ENCODE measurements at regions of chr10 and their contacts with region 1.

Region 1: GRCh38 chr10:69092959-69093850 is 5.3 kb downstream of the SRGN start:
- DNase-seq: peak in 2 of 3 donors; percentile 62 to 81
- ATAC-seq: peak; percentile 76 to 77
- H3K4me3 ChIP-seq: no peak overlapping the region
- H3K27ac ChIP-seq: no peak overlapping the region
- H3K4me1 ChIP-seq: peaks cover 2% of the 10 kb centered on the region
- H3K27me3 ChIP-seq: no peaks in the 10 kb centered on the region

Region 2: DNA sequence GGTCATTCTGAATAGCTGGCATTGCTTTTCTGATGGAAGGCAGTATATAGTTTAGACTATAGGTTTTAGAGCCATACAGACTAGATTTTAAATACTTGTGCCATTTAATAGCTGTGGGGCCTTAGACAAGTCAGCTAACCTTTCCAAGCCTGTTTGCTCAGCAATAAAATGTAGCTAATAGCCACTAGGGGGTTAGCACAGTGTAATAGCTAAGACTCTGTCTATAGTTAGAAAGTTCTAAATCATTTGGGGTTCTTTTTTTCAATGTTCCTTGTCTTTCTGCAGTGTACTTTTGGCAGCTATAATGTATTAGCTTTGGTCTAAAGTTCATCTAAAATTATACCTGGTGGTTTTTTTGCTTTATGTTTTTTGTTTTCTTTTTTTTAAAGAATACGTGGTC is 112.1 kb before region 1 on chr10:
- intact Hi-C with region 1: no loop called
- DNase-seq: no peak
- ATAC-seq: no peak
- H3K4me3 ChIP-seq: no peak overlapping the region
- H3K27ac ChIP-seq: no peak overlapping the region
- H3K4me1 ChIP-seq: no peaks in the 10 kb centered on the region
- H3K27me3 ChIP-seq: no peaks in the 10 kb centered on the region

Region 3: GRCh38 chr10:69004821-69005220 is 88.4 kb before region 1 on chr10:
- intact Hi-C with region 1: loop called (anchors 2 to 10 kb)
- DNase-seq: no peak
- ATAC-seq: peak; percentile 45 to 48
- H3K4me3 ChIP-seq: no peak overlapping the region
- H3K27ac ChIP-seq: no peak overlapping the region
- H3K4me1 ChIP-seq: no peaks in the 10 kb centered on the region
- H3K27me3 ChIP-seq: no peaks in the 10 kb centered on the region

Region 4: DNA sequence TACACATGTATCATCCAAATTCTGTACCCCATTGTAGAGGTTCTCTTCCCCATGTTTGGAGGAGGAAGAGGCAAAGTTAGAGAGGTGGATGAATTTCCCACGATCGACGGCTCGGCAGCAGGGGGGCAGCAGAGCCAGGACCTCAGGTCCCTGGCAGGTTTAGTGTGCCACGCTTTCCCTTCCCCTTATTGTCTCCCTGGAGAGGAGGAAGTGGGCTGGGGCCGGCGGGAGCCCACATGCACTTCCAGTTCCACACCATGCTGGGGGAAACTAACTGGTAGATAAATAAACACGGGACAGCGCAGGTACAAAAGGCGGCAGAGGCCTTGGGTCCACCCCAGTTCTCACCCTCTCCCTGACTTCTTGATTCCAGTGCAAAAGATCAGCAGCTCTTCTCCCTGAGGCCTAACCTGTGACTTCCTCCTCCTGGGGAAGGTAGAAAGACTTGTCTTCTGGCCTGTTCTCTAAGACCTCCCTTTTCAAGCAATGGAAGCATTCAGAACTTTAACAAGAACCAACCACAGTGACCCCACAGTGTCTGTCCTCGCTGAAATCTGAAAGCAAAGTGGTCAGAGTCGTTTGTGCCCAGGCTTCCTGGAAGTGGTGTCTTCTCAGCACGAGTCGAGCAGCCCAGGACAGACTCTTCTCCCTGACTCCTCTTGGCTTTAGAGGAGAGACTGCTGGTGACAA is 35.8 kb before region 1 on chr10:
- intact Hi-C with region 1: loop called in 1 of 4 experiments (anchors 5 kb)
- DNase-seq: peak; percentile 43 to 79 (median 79)
- ATAC-seq: peak; percentile 33 to 46
- H3K4me3 ChIP-seq: no peak overlapping the region
- H3K27ac ChIP-seq: peak overlapping the region; percentile 66
- H3K4me1 ChIP-seq: peaks cover 8% of the 10 kb centered on the region
- H3K27me3 ChIP-seq: no peaks in the 10 kb centered on the region

Region 5: GRCh38 chr10:69179743-69180524 is 86.7 kb after region 1 on chr10 and contains the start of gene SUPV3L1:
- intact Hi-C with region 1: no loop called
- DNase-seq: peak; percentile 95 to 98 (median 95)
- ATAC-seq: peak; percentile 96 to 97
- H3K4me3 ChIP-seq: peak within 1 kb of the TSS; percentile 82
- H3K27ac ChIP-seq: peak within 1 kb of the TSS; percentile 87
- H3K4me1 ChIP-seq: no peaks in the 10 kb centered on the region
- H3K27me3 ChIP-seq: no peaks in the 10 kb centered on the region
- total RNA-seq, gene SUPV3L1: 29.9 to 38.0 (median 33.5) TPM

Measured in right cardiac atrium (tissue), 5 donors.